ENCODE measurements at regions of chr11 and their contacts with region 1.

Region 1: DNA sequence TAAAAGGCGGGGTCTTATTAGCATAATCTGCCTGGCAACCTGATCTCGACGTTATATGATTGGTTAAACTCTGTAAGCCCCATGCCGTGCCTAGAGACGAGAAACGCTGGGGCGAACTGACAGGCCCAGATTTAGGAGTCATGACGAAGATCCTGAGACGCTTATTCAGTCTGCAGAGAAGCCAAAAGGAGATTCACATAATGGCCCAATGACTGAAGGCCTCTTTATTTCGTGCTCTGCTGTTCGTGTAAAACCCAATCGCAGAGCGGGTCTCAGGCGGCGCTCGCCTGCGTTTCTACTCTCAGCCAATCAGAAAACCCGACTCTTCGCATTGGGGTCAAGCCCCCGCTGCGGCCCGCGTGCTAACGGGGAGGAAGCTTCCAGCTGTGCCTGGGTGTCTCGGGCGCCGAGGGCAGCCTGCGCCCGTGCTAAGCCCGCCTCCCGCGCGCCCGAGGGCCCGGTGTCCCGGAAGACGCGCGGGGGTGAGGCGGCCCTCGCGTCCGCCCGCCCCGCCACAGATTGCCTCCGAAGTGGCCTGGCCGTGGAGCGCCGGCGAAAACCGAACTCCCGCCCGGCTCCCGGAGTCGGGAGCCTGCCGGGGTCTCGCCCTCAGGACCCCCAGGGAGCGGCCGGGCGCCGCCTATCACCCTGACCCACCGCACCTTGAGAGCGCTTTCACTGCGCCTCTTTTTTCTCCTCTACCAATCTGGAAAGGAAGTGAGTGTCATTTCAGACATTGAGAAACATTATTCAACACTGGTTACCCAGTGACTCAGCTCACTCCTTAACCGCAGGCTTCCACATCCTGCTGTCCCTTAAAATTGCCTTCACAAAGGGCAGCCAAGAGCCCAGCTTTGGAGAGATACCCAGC is 446 bp upstream of the PRDM10 start:
- DNase-seq: peak; percentile 96
- H3K4me3 ChIP-seq: peak overlapping the region; percentile 65 to 84
- H3K27ac ChIP-seq: peak overlapping the region; percentile 100
- H3K4me1 ChIP-seq: peaks cover 0 to 4% of the 10 kb centered on the region in 2 donors
- H3K27me3 ChIP-seq: no peaks in the 10 kb centered on the region
- CTCF ChIP-seq: peak in 2 of 4 experiments; percentile 10 to 28
- POLR2A ChIP-seq: peak; percentile 84 to 88

Region 2: GRCh38 chr11:130069684-130070108 is 66.6 kb after region 1 on chr11 and contains the start of gene APLP2:
- intact Hi-C with region 1: loop called (anchors 2 kb)
- DNase-seq: peak; percentile 98 to 100
- H3K4me3 ChIP-seq: peak within 1 kb of the TSS; percentile 68 to 89
- H3K27ac ChIP-seq: peak within 1 kb of the TSS; percentile 98
- H3K4me1 ChIP-seq: peaks cover 5 to 7% of the 10 kb centered on the region in 2 donors
- H3K27me3 ChIP-seq: no peaks in the 10 kb centered on the region
- CTCF ChIP-seq: peak in 1 of 4 experiments; percentile 29
- POLR2A ChIP-seq: peak; percentile 79 to 87
- total RNA-seq, gene APLP2: 226 to 376 (median 262) TPM

Measured in uterus (tissue), 4 donors.